IMR-90 (cell line): ENCODE measurements at regions of chr12 and their contacts with region 1.

Region 1: GRCh38 chr12:6267139-6267721 is 43.3 kb upstream of the PLEKHG6 start:
- DNase-seq: peak; percentile 75
- ATAC-seq: peak; percentile 66
- H3K4me3 ChIP-seq: no peak overlapping the region
- H3K27ac ChIP-seq: no peak overlapping the region
- H3K4me1 ChIP-seq: peaks cover 15% of the 10 kb centered on the region
- H3K27me3 ChIP-seq: peaks cover 4% of the 10 kb centered on the region; the same call in 1 of the 2 replicates
- CTCF ChIP-seq: no peak
- POLR2A ChIP-seq: no peak
- RAD21 ChIP-seq: no peak

Region 2: GRCh38 chr12:5768581-5769196 is 498.5 kb before region 1 on chr12:
- CTCF ChIA-PET with region 1: no interaction called
- POLR2A ChIA-PET with region 1: no interaction called
- dilution Hi-C with region 1: no loop called
- in situ Hi-C with region 1: no loop called
- intact Hi-C with region 1: no loop called
- DNase-seq: no peak
- ATAC-seq: no peak
- H3K4me3 ChIP-seq: no peak overlapping the region
- H3K27ac ChIP-seq: no peak overlapping the region
- H3K4me1 ChIP-seq: no peaks in the 10 kb centered on the region
- H3K27me3 ChIP-seq: peaks cover 32% of the 10 kb centered on the region
- CTCF ChIP-seq: no peak
- POLR2A ChIP-seq: no peak
- RAD21 ChIP-seq: no peak

Region 3: GRCh38 chr12:6230321-6231110 is 36.7 kb before region 1 on chr12:
- CTCF ChIA-PET with region 1: no interaction called
- POLR2A ChIA-PET with region 1: no interaction called
- dilution Hi-C with region 1: no loop called
- in situ Hi-C with region 1: no loop called
- intact Hi-C with region 1: loop called (anchors 2 kb)
- DNase-seq: no peak
- ATAC-seq: peak; percentile 10
- H3K4me3 ChIP-seq: no peak overlapping the region
- H3K27ac ChIP-seq: peak overlapping the region; percentile 52
- H3K4me1 ChIP-seq: peaks cover 35% of the 10 kb centered on the region
- H3K27me3 ChIP-seq: no peaks in the 10 kb centered on the region
- CTCF ChIP-seq: no peak
- POLR2A ChIP-seq: 0 out of 2 replicates have a peak, but pooled peaks have one; percentile 5
- RAD21 ChIP-seq: no peak

Region 4: GRCh38 chr12:6295094-6295811 is 28.0 kb after region 1 on chr12:
- CTCF ChIA-PET with region 1: no interaction called
- POLR2A ChIA-PET with region 1: no interaction called
- dilution Hi-C with region 1: no loop called
- in situ Hi-C with region 1: no loop called
- intact Hi-C with region 1: no loop called
- DNase-seq: peak; percentile 82
- ATAC-seq: peak; percentile 51
- H3K4me3 ChIP-seq: no peak overlapping the region
- H3K27ac ChIP-seq: no peak overlapping the region
- H3K4me1 ChIP-seq: peaks cover 24% of the 10 kb centered on the region
- H3K27me3 ChIP-seq: no peaks in the 10 kb centered on the region
- CTCF ChIP-seq: no peak
- POLR2A ChIP-seq: no peak
- RAD21 ChIP-seq: no peak